Activated CD8-positive, alpha-beta memory T cell treated with anti-CD3 and anti-CD28 coated beads, Interleukin-2, amount 10 ng/mL, durations not matched to agents 7 days and 5 days (primary cell): ENCODE measurements at regions of chr17 and their contacts with region 1.

Region 1: DNA sequence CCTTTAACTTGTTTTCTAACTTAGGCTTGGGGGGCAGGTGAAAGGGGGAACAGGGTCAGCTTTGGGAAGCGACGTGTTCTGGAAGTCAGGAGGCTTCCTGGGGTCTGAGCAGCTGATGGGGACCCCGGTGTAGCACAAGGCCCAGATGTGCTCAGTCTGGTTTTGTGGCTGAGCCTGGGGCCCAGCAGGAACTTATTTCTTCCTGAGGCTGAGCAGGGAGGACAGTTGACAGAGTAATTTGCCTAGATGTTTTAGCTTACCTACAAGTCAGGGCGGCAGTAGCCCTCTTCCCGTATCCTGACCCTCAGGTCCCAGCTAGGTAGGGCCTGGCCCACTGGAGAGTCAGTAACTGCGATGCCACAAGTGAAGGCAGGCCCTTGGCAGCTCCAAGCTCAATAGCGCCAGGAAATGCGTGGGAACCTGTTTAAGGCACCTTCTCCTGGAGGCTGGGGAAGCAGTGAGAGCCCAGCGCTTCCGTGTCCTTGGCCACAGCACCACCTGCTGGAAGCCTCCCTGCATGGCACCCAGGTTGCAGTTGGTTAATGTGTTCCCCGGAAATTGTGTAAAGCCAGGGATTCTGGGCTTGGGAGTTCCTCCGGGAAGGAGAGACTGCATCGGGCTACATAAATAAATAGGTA is 5.2 kb downstream of the CCR7 start:
- DNase-seq: peak; percentile 90
- ATAC-seq: peak; percentile 43
- H3K4me3 Mint-ChIP-seq: peak overlapping the region; percentile 77
- H3K27ac Mint-ChIP-seq: peak overlapping the region; percentile 93
- H3K4me1 Mint-ChIP-seq: peaks cover 91% of the 10 kb centered on the region
- H3K27me3 Mint-ChIP-seq: peaks cover 5% of the 10 kb centered on the region

Region 2: DNA sequence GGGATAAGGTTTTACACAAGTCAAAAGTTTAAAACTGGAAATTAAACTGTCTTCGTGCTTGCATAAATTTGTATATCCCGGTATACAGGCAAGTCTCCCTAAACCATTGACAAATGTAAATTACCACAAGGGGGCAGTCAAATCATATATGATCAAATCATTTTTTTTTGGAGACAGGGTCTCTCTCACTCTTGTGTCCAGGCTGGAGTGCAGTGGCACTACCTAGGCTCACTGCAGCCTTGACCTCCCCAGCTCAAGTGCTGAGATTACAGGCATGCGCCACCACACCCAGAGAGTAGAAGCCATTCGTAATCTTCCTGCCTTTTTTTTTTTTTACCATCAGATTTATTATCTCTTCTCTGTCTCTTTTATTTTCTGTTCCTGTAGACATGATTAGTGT is 160.9 kb before region 1 on chr17:
- CTCF ChIA-PET with region 1: interaction called, 10 read pairs
- DNase-seq: no peak
- ATAC-seq: no peak
- H3K4me3 Mint-ChIP-seq: no peak overlapping the region
- H3K27ac Mint-ChIP-seq: no peak overlapping the region
- H3K4me1 Mint-ChIP-seq: peaks cover 6% of the 10 kb centered on the region
- H3K27me3 Mint-ChIP-seq: no peaks in the 10 kb centered on the region

Region 3: GRCh38 chr17:40443583-40444327 is 116.3 kb before region 1 on chr17:
- CTCF ChIA-PET with region 1: interaction called, 20 read pairs
- DNase-seq: peak; percentile 77
- ATAC-seq: peak; percentile 87
- H3K4me3 Mint-ChIP-seq: peak overlapping the region; percentile 66
- H3K27ac Mint-ChIP-seq: peak overlapping the region; percentile 87
- H3K4me1 Mint-ChIP-seq: peaks cover 44% of the 10 kb centered on the region
- H3K27me3 Mint-ChIP-seq: peaks cover 22% of the 10 kb centered on the region

Region 4: GRCh38 chr17:40516581-40517285 is 43.3 kb before region 1 on chr17:
- CTCF ChIA-PET with region 1: interaction called, 12 read pairs
- DNase-seq: peak; percentile 93
- ATAC-seq: peak; percentile 79
- H3K4me3 Mint-ChIP-seq: peak overlapping the region; percentile 70
- H3K27ac Mint-ChIP-seq: peak overlapping the region; percentile 91
- H3K4me1 Mint-ChIP-seq: peaks cover 60% of the 10 kb centered on the region
- H3K27me3 Mint-ChIP-seq: peaks cover 21% of the 10 kb centered on the region

Region 5: DNA sequence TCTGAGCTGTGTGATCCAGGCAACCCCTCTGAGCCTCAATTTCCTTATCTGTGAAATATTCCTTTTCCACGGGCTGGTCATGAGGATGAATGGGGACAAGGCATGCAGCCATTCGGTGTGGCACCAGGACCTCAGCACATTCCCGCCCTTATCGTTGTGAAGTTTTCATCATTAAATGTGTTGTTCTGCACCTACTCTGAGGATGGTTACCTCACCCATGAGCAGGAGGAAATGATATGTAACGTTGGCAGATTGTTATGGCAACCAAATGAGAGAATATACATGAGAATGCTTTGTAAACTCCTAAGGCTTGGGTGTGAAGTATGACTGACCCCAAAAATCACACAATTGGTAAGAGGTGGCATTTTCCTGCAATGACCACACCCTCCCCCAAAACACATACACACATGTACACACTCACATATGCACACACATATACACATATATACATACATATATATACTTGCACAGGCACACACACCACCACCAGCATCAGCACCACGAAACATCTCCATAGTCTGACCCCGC is 48.1 kb after region 1 on chr17:
- CTCF ChIA-PET with region 1: interaction called, 52 read pairs
- DNase-seq: peak; percentile 65
- ATAC-seq: peak; percentile 76
- H3K4me3 Mint-ChIP-seq: no peak overlapping the region
- H3K27ac Mint-ChIP-seq: peak overlapping the region; percentile 76
- H3K4me1 Mint-ChIP-seq: peaks cover 94% of the 10 kb centered on the region
- H3K27me3 Mint-ChIP-seq: no peaks in the 10 kb centered on the region